ENCODE measurements at regions of chr9 and their contacts with region 1.

Region 1: GRCh38 chr9:133375724-133376654 is at the starts of genes STKLD1 and SURF4:
- DNase-seq: peak; percentile 92 to 96 (median 95)
- H3K4me3 ChIP-seq: peak within 1 kb of the TSS; percentile 79 to 91 (median 83)
- H3K27ac ChIP-seq: peak within 1 kb of the TSS; percentile 74 to 95
- H3K4me1 ChIP-seq: peaks cover 8 to 43% (median 38%) of the 10 kb centered on the region in 4 experiments
- H3K27me3 ChIP-seq: no peaks in the 10 kb centered on the region

Region 2: GRCh38 chr9:133149126-133150107 is 226.6 kb before region 1 on chr9:
- CTCF ChIA-PET with region 1: no interaction called
- POLR2A ChIA-PET with region 1: no interaction called
- DNase-seq: peak; percentile 92 to 96 (median 93)
- H3K4me3 ChIP-seq: peak overlapping the region; percentile 35 to 95 (median 85)
- H3K27ac ChIP-seq: peak overlapping the region in 1 of 2 experiments; percentile 87
- H3K4me1 ChIP-seq: peaks cover 3 to 44% (median 40%) of the 10 kb centered on the region in 4 experiments
- H3K27me3 ChIP-seq: no peaks in the 10 kb centered on the region

Region 3: DNA sequence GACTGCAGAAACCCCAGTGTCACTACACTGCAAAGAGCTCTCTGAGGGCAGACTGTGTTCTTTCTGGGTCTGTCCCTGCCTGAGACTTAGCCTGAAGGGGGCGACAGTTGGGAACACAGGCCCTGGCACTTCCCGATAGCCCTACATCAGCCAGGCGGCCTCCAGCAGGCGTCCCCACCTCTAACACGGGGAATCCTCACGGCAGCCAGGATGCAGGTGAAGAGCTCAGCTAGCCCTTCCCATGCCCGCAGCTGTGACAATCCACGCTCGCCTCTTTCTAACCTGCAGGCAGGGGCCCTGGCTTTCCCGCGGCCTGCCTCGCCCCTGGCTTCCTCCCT is 34.0 kb before region 1 on chr9:
- CTCF ChIA-PET with region 1: interaction called, 10 read pairs
- POLR2A ChIA-PET with region 1: no interaction called
- DNase-seq: no peak
- H3K4me3 ChIP-seq: peak overlapping the region in 1 of 7 experiments; percentile 23
- H3K27ac ChIP-seq: peak overlapping the region in 1 of 2 experiments; percentile 65
- H3K4me1 ChIP-seq: peaks cover 3 to 61% (median 57%) of the 10 kb centered on the region in 4 experiments
- H3K27me3 ChIP-seq: no peaks in the 10 kb centered on the region

Region 4: GRCh38 chr9:133356391-133357091 is 19.4 kb before region 1 on chr9 and contains the starts of genes SURF1 and SURF2:
- CTCF ChIA-PET with region 1: interaction called, 75 read pairs
- POLR2A ChIA-PET with region 1: interaction called, 7 read pairs
- DNase-seq: peak; percentile 67 to 88 (median 71)
- H3K4me3 ChIP-seq: peak within 1 kb of the TSS; percentile 37 to 89 (median 84)
- H3K27ac ChIP-seq: peak within 1 kb of the TSS; percentile 50 to 85
- H3K4me1 ChIP-seq: peaks cover 3 to 22% (median 21%) of the 10 kb centered on the region in 4 experiments
- H3K27me3 ChIP-seq: no peaks in the 10 kb centered on the region

Region 5: GRCh38 chr9:133362359-133363044 is 13.5 kb before region 1 on chr9:
- CTCF ChIA-PET with region 1: interaction called, 75 read pairs
- POLR2A ChIA-PET with region 1: interaction called, 7 read pairs
- DNase-seq: no peak
- H3K4me3 ChIP-seq: no peak overlapping the region
- H3K27ac ChIP-seq: no peak overlapping the region
- H3K4me1 ChIP-seq: peaks cover 0 to 2% (median under 1%) of the 10 kb centered on the region in 4 experiments
- H3K27me3 ChIP-seq: no peaks in the 10 kb centered on the region